ENCODE measurements at regions of chr6 and their contacts with region 1.

Region 1: DNA sequence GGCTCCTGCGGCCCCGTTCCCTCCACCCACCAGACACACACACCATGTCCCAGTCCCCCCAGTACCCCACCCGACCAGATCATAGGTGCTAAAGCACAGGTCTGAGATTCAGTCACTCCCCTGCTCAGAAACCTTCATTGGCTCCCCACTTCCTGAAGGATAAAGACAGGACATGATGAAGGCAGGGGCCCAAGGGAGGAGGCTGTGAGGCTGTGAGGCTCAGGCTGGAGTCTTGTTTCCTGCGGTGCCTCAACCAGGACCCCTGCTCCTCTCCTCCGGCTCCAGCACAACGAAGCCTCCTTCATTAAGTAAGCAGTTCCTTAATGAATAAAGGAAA is 81.1 kb downstream of the NCR2 start:
- DNase-seq: no peak

Region 2: GRCh38 chr6:41374618-41375590 is 41.6 kb before region 1 on chr6:
- in situ Hi-C with region 1: loop called (anchors 5 kb)
- DNase-seq: no peak

Region 3: DNA sequence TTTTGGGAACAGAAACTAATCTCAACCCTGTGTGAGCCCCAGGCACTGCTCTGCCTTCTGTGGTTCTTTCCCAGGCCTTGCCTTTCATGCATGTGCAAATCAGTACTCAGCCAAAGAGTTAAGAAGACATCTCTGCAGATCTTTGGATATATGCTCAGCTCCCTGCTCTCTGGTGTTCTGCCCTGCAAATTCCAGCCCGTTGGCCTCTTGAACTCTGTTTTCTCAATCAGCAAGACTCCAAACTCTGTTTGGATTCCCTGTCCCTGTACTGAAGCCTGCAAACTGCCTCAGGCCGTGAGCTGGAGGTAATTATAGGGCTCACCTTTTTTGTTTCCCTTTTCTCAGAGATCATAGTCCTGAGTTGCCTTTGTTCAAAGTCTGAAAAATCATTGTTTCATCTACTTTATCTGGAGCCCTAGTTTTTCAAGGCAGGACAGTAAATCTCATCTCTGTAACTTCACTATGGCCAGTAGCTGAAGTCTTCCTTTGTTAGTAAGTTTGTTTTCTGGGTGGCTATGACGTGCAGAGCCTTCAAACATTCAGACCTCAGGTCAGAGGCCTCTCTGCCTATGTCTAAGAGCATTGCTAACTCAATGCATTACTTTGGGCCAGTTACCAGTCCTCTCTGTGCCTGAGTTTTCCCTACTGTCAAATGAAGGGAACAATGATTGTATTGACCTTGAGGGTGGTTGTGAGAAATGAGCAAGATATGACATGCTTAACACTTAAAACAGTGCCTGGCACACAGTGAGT is 205.9 kb after region 1 on chr6:
- in situ Hi-C with region 1: no loop called
- DNase-seq: no peak

Measured in G401 (cell line).